ENCODE measurements at regions of chr1 and their contacts with region 1.

Region 1: GRCh38 chr1:212035123-212035834 is at the starts of genes DTL and INTS7:
- DNase-seq: peak; percentile 97
- ATAC-seq: peak; percentile 94
- H3K4me3 ChIP-seq: peak within 1 kb of the TSS; percentile 94 to 97
- H3K27ac ChIP-seq: peak within 1 kb of the TSS; percentile 97
- H3K4me1 ChIP-seq: peaks cover 61% of the 10 kb centered on the region
- H3K27me3 ChIP-seq: no peaks in the 10 kb centered on the region
- CTCF ChIP-seq: peak; percentile 98
- total RNA-seq, gene DTL: 26.7 TPM
- total RNA-seq, gene INTS7: 35.5 TPM

Region 2: GRCh38 chr1:212827824-212828278 is 792.6 kb after region 1 on chr1:
- CTCF ChIA-PET with region 1: interaction called, 13 read pairs
- POLR2A ChIA-PET with region 1: no interaction called
- in situ Hi-C with region 1: no loop called
- intact Hi-C with region 1: no loop called
- DNase-seq: no peak
- ATAC-seq: no peak; the same call in 1 of the 2 replicates
- H3K4me3 ChIP-seq: no peak overlapping the region
- H3K27ac ChIP-seq: no peak overlapping the region
- H3K4me1 ChIP-seq: no peaks in the 10 kb centered on the region
- H3K27me3 ChIP-seq: no peaks in the 10 kb centered on the region
- CTCF ChIP-seq: no peak

Measured in Panc1 (cell line).